ENCODE measurements at regions of chr19 and their contacts with region 1.

Region 1: GRCh38 chr19:18408053-18408476 is 10.6 kb upstream of the LRRC25 start:
- DNase-seq: peak; percentile 46
- H3K4me3 Mint-ChIP-seq: no peak overlapping the region
- H3K27ac Mint-ChIP-seq: no peak overlapping the region
- H3K4me1 Mint-ChIP-seq: peaks cover 5% of the 10 kb centered on the region
- H3K27me3 Mint-ChIP-seq: peaks cover 8% of the 10 kb centered on the region

Region 2: GRCh38 chr19:18388100-18388959 is 19.7 kb before region 1 on chr19:
- CTCF ChIA-PET with region 1: interaction called, 85 read pairs
- POLR2A ChIA-PET with region 1: no interaction called
- intact Hi-C with region 1: loop called (anchors 1 kb)
- DNase-seq: peak; percentile 88
- H3K4me3 Mint-ChIP-seq: peak overlapping the region; percentile 64
- H3K27ac Mint-ChIP-seq: no peak overlapping the region
- H3K4me1 Mint-ChIP-seq: peaks cover 4% of the 10 kb centered on the region
- H3K27me3 Mint-ChIP-seq: peaks cover 31% of the 10 kb centered on the region

Region 3: DNA sequence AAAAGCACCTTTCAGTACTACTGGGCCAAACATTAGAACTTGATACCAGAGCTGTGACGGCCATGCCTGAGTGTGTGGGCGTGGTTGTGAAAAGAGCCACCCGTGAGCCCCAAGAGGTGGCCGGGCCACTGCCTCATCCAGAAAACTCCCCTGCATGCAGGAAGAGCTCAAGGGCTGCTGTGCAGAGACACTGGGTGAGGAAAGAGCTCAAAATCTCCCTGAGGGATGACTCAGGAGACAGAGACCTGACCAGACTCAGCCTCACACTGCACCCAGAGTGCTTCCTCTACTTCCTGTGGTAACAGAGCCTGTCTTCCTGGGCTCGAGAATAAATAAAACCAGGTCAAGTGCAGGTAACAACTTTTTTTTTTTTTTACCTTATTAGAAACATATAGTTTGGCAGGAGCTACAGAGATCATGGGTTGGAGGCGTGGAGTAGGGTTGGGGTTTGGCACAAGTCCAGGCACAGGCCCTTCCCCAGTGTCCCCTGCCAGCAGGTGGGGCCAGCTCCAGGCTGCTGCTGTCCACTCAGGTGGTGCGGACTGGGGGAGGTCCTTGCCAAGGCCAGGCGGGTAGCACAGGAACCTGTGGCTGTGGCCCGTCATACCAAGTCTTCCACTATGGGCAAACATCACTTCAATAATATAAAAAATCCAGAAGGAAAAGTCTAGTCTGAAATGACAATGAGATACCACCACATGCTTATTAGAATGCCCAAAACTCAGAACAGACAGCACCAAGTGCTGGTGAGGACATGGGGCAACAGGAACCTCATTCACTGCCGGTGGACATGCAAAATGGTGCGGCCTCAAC is 88.3 kb after region 1 on chr19:
- CTCF ChIA-PET with region 1: no interaction called
- POLR2A ChIA-PET with region 1: no interaction called
- intact Hi-C with region 1: no loop called
- DNase-seq: peak; percentile 85
- H3K4me3 Mint-ChIP-seq: peak overlapping the region; percentile 36
- H3K27ac Mint-ChIP-seq: peak overlapping the region; percentile 90
- H3K4me1 Mint-ChIP-seq: peaks cover 80% of the 10 kb centered on the region
- H3K27me3 Mint-ChIP-seq: no peaks in the 10 kb centered on the region

Region 4: GRCh38 chr19:18557474-18558201 is 149.6 kb after region 1 on chr19 and contains the start of gene KXD1:
- CTCF ChIA-PET with region 1: no interaction called
- POLR2A ChIA-PET with region 1: no interaction called
- intact Hi-C with region 1: no loop called
- DNase-seq: peak; percentile 99
- H3K4me3 Mint-ChIP-seq: peak within 1 kb of the TSS; percentile 86
- H3K27ac Mint-ChIP-seq: peak within 1 kb of the TSS; percentile 94
- H3K4me1 Mint-ChIP-seq: peaks cover 13% of the 10 kb centered on the region
- H3K27me3 Mint-ChIP-seq: no peaks in the 10 kb centered on the region
- total RNA-seq, gene KXD1: 112 to 114 TPM

Measured in activated CD4-positive, alpha-beta memory T cell treated with anti-CD3 and anti-CD28 coated beads for 36 hours (primary cell).